ENCODE measurements at regions of chr5 and their contacts with region 1.

Region 1: GRCh38 chr5:74648835-74649293 is 8.3 kb upstream of the ENC1 start:
- DNase-seq: no peak
- ATAC-seq: peak; percentile 87 to 97 (median 90)
- H3K4me3 ChIP-seq: peak overlapping the region; percentile 33
- H3K27ac ChIP-seq: no peak overlapping the region
- H3K4me1 ChIP-seq: peaks cover 7% of the 10 kb centered on the region
- H3K27me3 ChIP-seq: no peaks in the 10 kb centered on the region
- CTCF ChIP-seq: peak; percentile 78

Region 2: GRCh38 chr5:73902327-73903051 is 746.4 kb before region 1 on chr5:
- intact Hi-C with region 1: loop called (anchors 2 kb)
- DNase-seq: no peak
- ATAC-seq: peak; percentile 46 to 71 (median 54)
- H3K4me3 ChIP-seq: peak overlapping the region; percentile 37
- H3K27ac ChIP-seq: no peak overlapping the region
- H3K4me1 ChIP-seq: no peaks in the 10 kb centered on the region
- H3K27me3 ChIP-seq: no peaks in the 10 kb centered on the region
- CTCF ChIP-seq: peak; percentile 93

Region 3: GRCh38 chr5:74035521-74035981 is 613.3 kb before region 1 on chr5:
- intact Hi-C with region 1: loop called (anchors 2 to 5 kb)
- DNase-seq: no peak
- ATAC-seq: peak; percentile 39 to 82 (median 68)
- H3K4me3 ChIP-seq: no peak overlapping the region
- H3K27ac ChIP-seq: no peak overlapping the region
- H3K4me1 ChIP-seq: peaks cover 16% of the 10 kb centered on the region
- H3K27me3 ChIP-seq: no peaks in the 10 kb centered on the region
- CTCF ChIP-seq: peak; percentile 51

Region 4: DNA sequence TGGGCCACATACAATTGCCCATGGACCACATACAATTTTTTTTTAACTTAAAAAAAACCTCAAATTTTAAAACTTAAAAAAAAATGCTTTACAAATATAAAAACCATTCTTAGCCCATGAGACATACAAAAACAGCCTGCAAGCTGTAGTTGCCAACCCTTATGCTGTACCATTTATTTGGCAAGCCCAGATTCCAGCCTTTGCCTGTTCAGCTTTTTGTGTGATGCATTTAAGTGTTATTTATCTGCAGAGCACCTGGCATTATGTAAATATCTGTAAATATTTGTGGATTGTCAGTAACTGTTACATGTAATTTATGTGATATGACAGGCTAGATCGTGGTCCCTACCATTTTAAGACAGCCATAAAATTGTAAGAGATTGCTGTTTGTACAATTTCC is 68.7 kb after region 1 on chr5:
- intact Hi-C with region 1: no loop called
- DNase-seq: no peak
- ATAC-seq: no peak
- H3K4me3 ChIP-seq: no peak overlapping the region
- H3K27ac ChIP-seq: no peak overlapping the region
- H3K4me1 ChIP-seq: no peaks in the 10 kb centered on the region
- H3K27me3 ChIP-seq: no peaks in the 10 kb centered on the region
- CTCF ChIP-seq: no peak